ENCODE measurements at regions of chr17 and their contacts with region 1.

Region 1: DNA sequence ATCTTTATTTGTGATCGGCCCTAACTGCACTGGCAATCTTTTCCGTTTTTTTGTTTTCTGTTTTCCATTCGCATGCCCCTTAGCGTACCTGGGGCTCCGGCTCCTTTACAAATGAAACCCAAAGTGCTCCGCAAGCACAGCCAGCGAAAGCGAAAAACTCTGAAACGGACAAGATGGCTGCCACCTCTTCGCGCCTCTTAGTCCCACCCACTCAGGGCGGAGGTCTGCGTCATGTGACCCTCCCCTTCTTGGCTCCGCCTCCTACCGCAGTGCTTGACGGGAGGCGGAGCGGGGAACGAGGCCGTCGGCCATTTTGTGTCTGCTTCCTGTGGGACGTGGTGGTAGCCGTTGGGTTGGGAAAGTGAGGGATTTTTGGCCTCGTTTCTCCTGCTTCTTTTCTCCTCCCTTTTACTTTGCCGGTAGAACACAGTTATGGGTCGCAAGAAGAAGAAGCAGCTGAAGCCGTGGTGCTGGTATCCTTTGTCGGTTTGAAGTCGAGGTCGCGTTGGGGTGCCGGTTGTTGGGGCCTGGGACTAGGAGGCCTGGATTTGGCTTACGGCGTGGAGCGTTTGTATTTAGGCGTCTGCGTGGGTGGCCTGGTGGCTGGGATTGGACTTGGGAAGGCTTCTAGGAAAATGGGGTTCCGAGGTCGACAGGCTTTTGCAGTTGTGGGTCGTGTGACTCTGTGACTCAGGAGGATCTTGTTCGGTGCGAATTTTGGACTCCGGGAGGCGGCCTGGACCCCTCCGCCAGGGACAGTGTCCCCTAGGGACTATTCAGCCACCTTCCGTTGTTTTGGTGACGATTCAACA is at the start of gene ZNF207:
- DNase-seq: peak; percentile 94
- H3K4me3 Mint-ChIP-seq: peak within 1 kb of the TSS; percentile 99
- H3K27ac Mint-ChIP-seq: peak within 1 kb of the TSS; percentile 99
- H3K4me1 Mint-ChIP-seq: peaks cover 46% of the 10 kb centered on the region
- H3K27me3 Mint-ChIP-seq: no peaks in the 10 kb centered on the region
- total RNA-seq, gene ZNF207: 268 and 275 TPM in 2 replicates

Region 2: DNA sequence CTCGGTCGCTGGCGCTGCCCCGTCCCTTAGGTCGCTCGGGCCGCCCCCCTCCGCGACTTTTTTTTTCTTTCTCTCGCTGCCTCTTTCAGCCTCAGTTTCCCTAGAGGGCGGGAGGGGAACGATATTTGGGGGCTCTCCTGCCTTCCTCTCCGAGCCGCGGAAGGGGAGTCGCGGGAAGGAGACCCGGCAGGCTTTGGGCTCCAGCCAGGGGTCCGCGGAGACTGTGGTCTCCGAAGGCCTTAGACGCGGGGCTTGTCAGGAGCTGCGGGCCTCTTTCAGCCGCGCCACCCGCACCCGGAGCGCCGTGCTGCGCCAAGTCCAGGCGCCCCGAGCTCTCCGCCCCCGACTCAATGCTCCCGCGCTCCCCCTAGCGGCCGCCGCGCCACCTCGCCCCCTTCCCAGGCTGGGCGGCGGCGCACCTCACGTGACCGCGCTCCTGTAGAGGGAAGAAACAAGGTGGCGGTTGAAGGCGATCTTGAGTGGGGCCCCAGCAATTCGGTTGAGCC is 343.1 kb before region 1 on chr17 and contains the start of gene LRRC37B:
- intact Hi-C with region 1: loop called (anchors 5 kb)
- DNase-seq: peak; percentile 87
- H3K4me3 Mint-ChIP-seq: peak within 1 kb of the TSS; percentile 93
- H3K27ac Mint-ChIP-seq: peak within 1 kb of the TSS; percentile 90
- H3K4me1 Mint-ChIP-seq: peaks cover 36% of the 10 kb centered on the region
- H3K27me3 Mint-ChIP-seq: no peaks in the 10 kb centered on the region
- total RNA-seq, gene LRRC37B: 16.7 and 22.7 TPM in 2 replicates

Region 3: GRCh38 chr17:32174889-32175288 is 175.2 kb before region 1 on chr17:
- intact Hi-C with region 1: no loop called
- DNase-seq: no peak
- H3K4me3 Mint-ChIP-seq: no peak overlapping the region
- H3K27ac Mint-ChIP-seq: no peak overlapping the region
- H3K4me1 Mint-ChIP-seq: no peaks in the 10 kb centered on the region
- H3K27me3 Mint-ChIP-seq: no peaks in the 10 kb centered on the region

Region 4: GRCh38 chr17:32253117-32253611 is 96.9 kb before region 1 on chr17:
- intact Hi-C with region 1: loop called (anchors 1 kb)
- DNase-seq: peak; percentile 67
- H3K4me3 Mint-ChIP-seq: no peak overlapping the region
- H3K27ac Mint-ChIP-seq: no peak overlapping the region
- H3K4me1 Mint-ChIP-seq: no peaks in the 10 kb centered on the region
- H3K27me3 Mint-ChIP-seq: peaks cover 21% of the 10 kb centered on the region

Region 5: GRCh38 chr17:32444308-32445073 is 94.4 kb after region 1 on chr17 and contains the start of gene PSMD11:
- intact Hi-C with region 1: loop called (anchors 1 kb)
- DNase-seq: peak; percentile 98
- H3K4me3 Mint-ChIP-seq: peak within 1 kb of the TSS; percentile 94
- H3K27ac Mint-ChIP-seq: peak within 1 kb of the TSS; percentile 88
- H3K4me1 Mint-ChIP-seq: peaks cover 28% of the 10 kb centered on the region
- H3K27me3 Mint-ChIP-seq: peaks cover 5% of the 10 kb centered on the region
- total RNA-seq, gene PSMD11: 190 and 198 TPM in 2 replicates